H1 (cell line): ENCODE measurements at regions of chr15 and their contacts with region 1.

Region 1: DNA sequence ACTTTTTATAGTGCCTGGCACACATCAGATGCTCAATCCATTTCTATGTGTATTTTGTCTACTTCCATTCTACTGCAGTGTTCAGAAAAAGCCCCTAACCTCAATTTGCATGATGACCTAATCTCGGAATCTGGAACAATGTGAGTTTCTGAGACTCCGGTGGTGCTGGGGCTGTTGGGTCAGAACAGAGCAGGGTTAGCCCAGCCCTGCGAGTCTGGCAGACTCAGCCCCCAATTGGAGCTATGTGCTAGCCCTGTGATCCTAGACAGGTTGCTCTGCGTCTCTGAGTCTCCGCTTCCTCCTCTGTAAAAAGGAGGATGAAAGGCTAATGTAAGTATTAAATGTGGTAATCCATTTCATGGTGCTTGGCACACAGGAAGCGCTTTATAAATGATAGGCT is 95.0 kb upstream of the ICE2 start:
- DNase-seq: no peak
- H3K4me3 ChIP-seq: no peak overlapping the region
- H3K27ac ChIP-seq: no peak overlapping the region
- H3K4me1 ChIP-seq: peaks cover 0 to 16% (median 9%) of the 10 kb centered on the region in 4 experiments; a peak in 5 of 7 replicates
- H3K27me3 ChIP-seq: no peaks in the 10 kb centered on the region
- CTCF ChIP-seq: no peak
- EP300 ChIP-seq: no peak
- POLR2A ChIP-seq: no peak
- RAD21 ChIP-seq: no peak

Region 2: GRCh38 chr15:60563066-60563465 is 10.9 kb before region 1 on chr15:
- CTCF ChIA-PET with region 1: interaction called, 10 read pairs
- POLR2A ChIA-PET with region 1: interaction called, 3 read pairs
- DNase-seq: no peak
- H3K4me3 ChIP-seq: no peak overlapping the region
- H3K27ac ChIP-seq: no peak overlapping the region
- H3K4me1 ChIP-seq: peaks cover 1 to 3% (median 2%) of the 10 kb centered on the region in 4 experiments; a peak in 6 of 7 replicates
- H3K27me3 ChIP-seq: no peaks in the 10 kb centered on the region
- CTCF ChIP-seq: no peak
- EP300 ChIP-seq: no peak
- POLR2A ChIP-seq: no peak
- RAD21 ChIP-seq: no peak

Region 3: DNA sequence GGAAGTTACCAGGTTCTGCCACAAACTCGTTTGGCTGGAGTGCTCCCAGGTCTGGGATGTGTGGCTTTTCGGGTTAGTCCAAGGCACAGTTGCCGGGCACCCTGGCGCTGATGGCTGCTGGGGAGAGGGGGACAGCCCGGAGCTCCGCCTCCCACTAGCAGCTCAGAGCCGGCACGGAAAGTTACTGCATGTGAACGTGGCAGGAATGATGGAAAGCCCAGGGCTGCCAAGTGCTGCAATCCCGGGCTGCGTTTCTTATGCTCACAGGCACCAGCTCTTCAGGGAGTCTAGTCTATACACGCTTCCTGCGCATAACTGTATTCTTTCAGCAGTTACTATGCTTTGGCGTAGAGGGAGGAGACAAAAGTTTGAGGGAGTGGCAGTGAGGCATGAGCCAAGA is 46.8 kb after region 1 on chr15:
- CTCF ChIA-PET with region 1: no interaction called
- POLR2A ChIA-PET with region 1: no interaction called
- DNase-seq: peak in 1 of 2 experiments; percentile 74
- H3K4me3 ChIP-seq: no peak overlapping the region
- H3K27ac ChIP-seq: no peak overlapping the region
- H3K4me1 ChIP-seq: peaks cover under 1 to 7% (median 4%) of the 10 kb centered on the region in 4 experiments
- H3K27me3 ChIP-seq: no peaks in the 10 kb centered on the region
- CTCF ChIP-seq: no peak
- EP300 ChIP-seq: no peak
- POLR2A ChIP-seq: no peak
- RAD21 ChIP-seq: no peak